Naive thymus-derived CD4-positive, alpha-beta T cell (primary cell): ENCODE measurements at regions of chr11 and their contacts with region 1.

Region 1: GRCh38 chr11:6746086-6746618 is 25.6 kb downstream of the OR2AG2 start:
- DNase-seq: peak in 8 of 9 donors; percentile 32 to 66 (median 64)
- ATAC-seq: peak; percentile 89
- H3K4me3 ChIP-seq: peak overlapping the region; percentile 80
- H3K4me3 Mint-ChIP-seq: no peak overlapping the region
- H3K27ac ChIP-seq: peak overlapping the region; percentile 85
- H3K27ac Mint-ChIP-seq: no peak overlapping the region
- H3K4me1 ChIP-seq: peaks cover 18 to 37% of the 10 kb centered on the region in 2 donors
- H3K4me1 Mint-ChIP-seq: peaks cover 26 to 48% (median 29%) of the 10 kb centered on the region in 7 donors
- H3K27me3 ChIP-seq: no peaks in the 10 kb centered on the region
- H3K27me3 Mint-ChIP-seq: no peaks in the 10 kb centered on the region

Region 2: GRCh38 chr11:6269994-6270393 is 476.2 kb before region 1 on chr11:
- CTCF ChIA-PET with region 1: no interaction called
- POLR2A ChIA-PET with region 1: no interaction called
- intact Hi-C with region 1: no loop called
- DNase-seq: no peak
- ATAC-seq: peak; percentile 20
- H3K4me3 ChIP-seq: no peak overlapping the region
- H3K4me3 Mint-ChIP-seq: no peak overlapping the region
- H3K27ac ChIP-seq: no peak overlapping the region
- H3K27ac Mint-ChIP-seq: no peak overlapping the region
- H3K4me1 ChIP-seq: no peaks in the 10 kb centered on the region
- H3K4me1 Mint-ChIP-seq: peaks cover 0 to 4% (median 0%) of the 10 kb centered on the region in 7 donors
- H3K27me3 ChIP-seq: no peaks in the 10 kb centered on the region
- H3K27me3 Mint-ChIP-seq: peaks cover 26 to 56% (median 44%) of the 10 kb centered on the region in 5 donors

Region 3: GRCh38 chr11:6419009-6419631 is 327.0 kb before region 1 on chr11 and contains the start of gene APBB1:
- CTCF ChIA-PET with region 1: no interaction called
- POLR2A ChIA-PET with region 1: interaction called, 3 read pairs
- intact Hi-C with region 1: loop called in 1 of 2 experiments (anchors 10 kb)
- DNase-seq: peak; percentile 71 to 87 (median 81)
- ATAC-seq: peak; percentile 89
- H3K4me3 ChIP-seq: peak within 1 kb of the TSS; percentile 79
- H3K4me3 Mint-ChIP-seq: peak within 1 kb of the TSS in 7 of 10 donors; percentile 78 to 92 (median 85)
- H3K27ac ChIP-seq: peak within 1 kb of the TSS; percentile 92
- H3K27ac Mint-ChIP-seq: peak within 1 kb of the TSS; percentile 47 to 92 (median 89)
- H3K4me1 ChIP-seq: peaks cover 27 to 46% of the 10 kb centered on the region in 2 donors
- H3K4me1 Mint-ChIP-seq: peaks cover 2 to 18% (median 14%) of the 10 kb centered on the region in 7 donors
- H3K27me3 ChIP-seq: no peaks in the 10 kb centered on the region
- H3K27me3 Mint-ChIP-seq: peaks cover 0 to 36% (median 11%) of the 10 kb centered on the region in 5 donors
- total RNA-seq, gene APBB1: 46.9 to 188 (median 154) TPM

Region 4: GRCh38 chr11:6531267-6531752 is 214.8 kb before region 1 on chr11:
- CTCF ChIA-PET with region 1: interaction called, 10 read pairs
- POLR2A ChIA-PET with region 1: interaction called, 3 read pairs
- intact Hi-C with region 1: no loop called
- DNase-seq: peak in 7 of 9 donors; percentile 7 to 51 (median 39)
- ATAC-seq: peak; percentile 83
- H3K4me3 ChIP-seq: no peak overlapping the region
- H3K4me3 Mint-ChIP-seq: no peak overlapping the region
- H3K27ac ChIP-seq: no peak overlapping the region
- H3K27ac Mint-ChIP-seq: no peak overlapping the region
- H3K4me1 ChIP-seq: peaks cover 4 to 5% of the 10 kb centered on the region in 2 donors
- H3K4me1 Mint-ChIP-seq: peaks cover 5 to 14% (median 11%) of the 10 kb centered on the region in 7 donors
- H3K27me3 ChIP-seq: no peaks in the 10 kb centered on the region
- H3K27me3 Mint-ChIP-seq: no peaks in the 10 kb centered on the region

Region 5: GRCh38 chr11:6603287-6604080 is 142.7 kb before region 1 on chr11 and contains the starts of genes ILK and RRP8:
- CTCF ChIA-PET with region 1: no interaction called
- POLR2A ChIA-PET with region 1: interaction called, 5 read pairs
- intact Hi-C with region 1: loop called (anchors 2 kb)
- DNase-seq: peak; percentile 69 to 86 (median 78)
- ATAC-seq: peak; percentile 92
- H3K4me3 ChIP-seq: peak within 1 kb of the TSS; percentile 85
- H3K4me3 Mint-ChIP-seq: no peak within 1 kb of the TSS
- H3K27ac ChIP-seq: peak within 1 kb of the TSS; percentile 86
- H3K27ac Mint-ChIP-seq: no peak within 1 kb of the TSS
- H3K4me1 ChIP-seq: peaks cover 51% of the 10 kb centered on the region in 2 donors
- H3K4me1 Mint-ChIP-seq: peaks cover 9 to 33% (median 21%) of the 10 kb centered on the region in 7 donors
- H3K27me3 ChIP-seq: no peaks in the 10 kb centered on the region
- H3K27me3 Mint-ChIP-seq: no peaks in the 10 kb centered on the region
- total RNA-seq, gene ILK: 34.4 to 165 (median 89.6) TPM
- total RNA-seq, gene RRP8: 21.4 to 37.9 (median 27.9) TPM

Region 6: GRCh38 chr11:6833356-6833755 is 87.2 kb after region 1 on chr11:
- CTCF ChIA-PET with region 1: no interaction called
- POLR2A ChIA-PET with region 1: no interaction called
- intact Hi-C with region 1: no loop called
- DNase-seq: no peak
- ATAC-seq: no peak
- H3K4me3 ChIP-seq: no peak overlapping the region
- H3K4me3 Mint-ChIP-seq: no peak overlapping the region
- H3K27ac ChIP-seq: no peak overlapping the region
- H3K27ac Mint-ChIP-seq: no peak overlapping the region
- H3K4me1 ChIP-seq: no peaks in the 10 kb centered on the region
- H3K4me1 Mint-ChIP-seq: peaks cover 0 to 2% (median 0%) of the 10 kb centered on the region in 7 donors
- H3K27me3 ChIP-seq: no peaks in the 10 kb centered on the region
- H3K27me3 Mint-ChIP-seq: peaks cover 3 to 20% (median 13%) of the 10 kb centered on the region in 5 donors

Region 7: DNA sequence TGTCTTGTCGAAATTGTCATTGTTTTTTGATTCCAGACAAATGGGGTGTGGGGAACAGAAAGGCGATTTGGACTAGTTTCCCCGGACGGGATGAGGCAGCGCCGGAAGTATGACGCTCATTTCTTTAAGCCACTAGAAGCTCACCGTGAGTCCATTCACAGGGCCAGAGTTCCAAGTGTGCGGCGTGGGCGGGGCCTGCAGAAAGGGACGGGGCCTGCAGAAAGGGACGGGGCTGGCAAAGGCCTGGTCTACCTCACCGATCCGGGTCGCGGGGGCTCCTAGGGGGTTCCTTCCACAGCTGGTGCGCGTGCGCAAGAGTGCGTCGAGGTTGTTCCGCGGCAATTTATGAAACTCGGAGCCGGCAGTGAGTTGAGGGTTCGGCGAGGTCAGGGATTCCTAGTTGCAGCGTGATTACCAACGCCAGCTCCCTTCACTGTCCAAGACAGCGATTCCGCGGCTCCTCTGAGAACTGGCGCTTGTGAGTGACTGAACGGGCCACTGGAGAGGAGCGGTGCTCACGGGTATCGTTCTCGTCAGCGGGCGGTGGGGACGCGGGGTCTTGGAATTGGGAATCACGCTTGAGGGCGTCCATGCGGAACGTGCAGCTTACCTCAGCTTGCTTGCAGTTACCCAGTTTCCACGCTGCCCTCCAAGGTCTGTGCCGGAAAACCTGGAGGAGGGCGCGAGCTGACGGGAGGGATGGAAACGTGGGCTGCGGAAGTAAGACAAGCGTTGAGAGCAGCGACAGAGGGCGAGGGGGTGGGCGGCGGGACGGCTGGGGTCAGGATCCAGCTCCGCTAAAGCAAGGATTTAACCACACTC is 180.3 kb after region 1 on chr11 and contains the start of gene ZNF215:
- CTCF ChIA-PET with region 1: no interaction called
- POLR2A ChIA-PET with region 1: no interaction called
- intact Hi-C with region 1: loop called in 1 of 2 experiments (anchors 5 kb)
- DNase-seq: peak in 4 of 9 donors; percentile 7 to 64 (median 34)
- ATAC-seq: peak; percentile 67
- H3K4me3 ChIP-seq: peak within 1 kb of the TSS; percentile 48
- H3K4me3 Mint-ChIP-seq: peak within 1 kb of the TSS; percentile 65 to 91 (median 78)
- H3K27ac ChIP-seq: peak within 1 kb of the TSS; percentile 47
- H3K27ac Mint-ChIP-seq: peak within 1 kb of the TSS in 3 of 9 donors; percentile 27 to 37 (median 34)
- H3K4me1 ChIP-seq: peaks cover 0 to 8% of the 10 kb centered on the region in 2 donors
- H3K4me1 Mint-ChIP-seq: peaks cover 7 to 36% (median 21%) of the 10 kb centered on the region in 7 donors
- H3K27me3 ChIP-seq: peaks cover 0 to 3% of the 10 kb centered on the region in 2 donors
- H3K27me3 Mint-ChIP-seq: peaks cover 30 to 83% (median 67%) of the 10 kb centered on the region in 5 donors
- total RNA-seq, gene ZNF215: 0.35 to 2.4 (median 0.55) TPM in 4 of 5 experiments, not detected in the other